ENCODE measurements at regions of chr7 and their contacts with region 1.

Region 1: GRCh38 chr7:55951637-55952351 is at the start of gene MRPS17:
- DNase-seq: peak; percentile 94
- H3K4me3 ChIP-seq: peak within 1 kb of the TSS; percentile 95
- H3K27ac ChIP-seq: peak within 1 kb of the TSS; percentile 10
- H3K4me1 ChIP-seq: peaks cover 7% of the 10 kb centered on the region
- CTCF ChIP-seq: no peak
- total RNA-seq, gene MRPS17: 24.9 and 27.8 TPM in 2 replicates

Region 2: DNA sequence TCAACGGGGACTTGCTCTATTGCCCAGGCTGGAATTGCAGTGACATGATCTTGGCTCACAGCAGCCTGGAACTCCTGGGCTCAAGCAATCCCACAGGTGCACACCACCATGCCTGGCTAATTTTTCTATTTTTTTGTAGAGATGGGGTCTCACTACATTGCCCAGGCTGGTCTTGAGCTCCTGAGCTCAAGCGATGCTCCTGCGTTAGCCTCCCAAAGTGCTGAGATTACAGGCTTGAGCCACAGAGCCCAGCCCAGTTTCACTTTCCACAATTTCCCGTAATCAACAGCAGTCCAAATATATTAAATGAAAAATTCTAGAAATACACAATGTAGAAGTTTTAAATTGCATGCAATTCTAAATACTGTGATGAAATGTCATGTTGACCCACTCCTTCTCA is 113.2 kb before region 1 on chr7:
- CTCF ChIA-PET with region 1: no interaction called
- POLR2A ChIA-PET with region 1: no interaction called
- intact Hi-C with region 1: no loop called
- DNase-seq: no peak
- H3K4me3 ChIP-seq: no peak overlapping the region
- H3K27ac ChIP-seq: no peak overlapping the region
- H3K4me1 ChIP-seq: no peaks in the 10 kb centered on the region
- CTCF ChIP-seq: no peak

Region 3: DNA sequence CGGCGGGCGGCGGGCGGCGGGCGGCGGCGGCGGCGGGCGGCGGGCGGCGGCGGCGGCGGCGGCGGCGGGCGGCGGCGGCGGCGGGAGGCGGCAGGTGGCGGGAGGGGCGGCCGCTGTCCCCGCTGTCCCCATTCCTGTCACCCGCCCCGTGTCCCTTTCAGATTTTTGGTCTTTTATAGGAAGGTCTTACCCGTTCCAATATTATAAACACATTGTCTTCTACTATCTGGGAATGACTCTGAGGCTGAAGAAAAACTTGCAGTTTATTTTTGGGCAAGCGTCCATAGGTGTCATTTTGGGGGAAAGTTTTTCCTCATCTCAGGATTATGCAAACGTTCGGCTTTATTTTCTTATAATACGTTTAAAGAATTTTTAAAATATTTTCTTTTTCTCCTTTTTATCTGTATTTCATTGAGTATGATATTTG is 64.0 kb before region 1 on chr7:
- CTCF ChIA-PET with region 1: no interaction called
- POLR2A ChIA-PET with region 1: interaction called, 4 read pairs
- intact Hi-C with region 1: loop called (anchors 2 kb)
- DNase-seq: peak; percentile 14
- H3K4me3 ChIP-seq: peak overlapping the region; percentile 68
- H3K27ac ChIP-seq: peak overlapping the region; percentile 23
- H3K4me1 ChIP-seq: peaks cover 3% of the 10 kb centered on the region
- CTCF ChIP-seq: no peak

Region 4: DNA sequence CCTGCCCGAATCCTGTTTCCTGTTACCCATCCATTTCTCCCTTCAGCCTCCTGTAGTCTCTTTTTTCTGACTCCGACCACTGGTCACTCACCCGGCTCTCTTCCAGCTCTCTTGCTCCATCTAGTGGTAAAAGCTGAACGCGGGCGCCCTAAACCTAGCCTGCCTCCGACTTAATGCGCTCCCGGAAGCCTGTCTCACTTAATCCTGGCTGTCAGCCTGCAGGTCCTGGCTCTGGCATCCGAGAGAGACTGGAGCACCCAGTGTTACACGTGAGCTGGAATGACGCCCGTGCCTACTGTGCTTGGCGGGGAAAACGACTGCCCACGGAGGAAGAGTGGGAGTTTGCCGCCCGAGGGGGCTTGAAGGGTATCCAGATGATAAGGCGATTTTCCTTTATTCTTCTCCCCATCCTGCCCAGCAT is 122.6 kb after region 1 on chr7:
- CTCF ChIA-PET with region 1: no interaction called
- POLR2A ChIA-PET with region 1: interaction called, 10 read pairs
- intact Hi-C with region 1: no loop called
- DNase-seq: peak; percentile 78
- H3K4me3 ChIP-seq: no peak overlapping the region
- H3K27ac ChIP-seq: no peak overlapping the region
- H3K4me1 ChIP-seq: no peaks in the 10 kb centered on the region
- CTCF ChIP-seq: peak; percentile 93